Left cardiac atrium (tissue), 4 donors: ENCODE measurements at regions of chr4 and their contacts with region 1.

Region 1: DNA sequence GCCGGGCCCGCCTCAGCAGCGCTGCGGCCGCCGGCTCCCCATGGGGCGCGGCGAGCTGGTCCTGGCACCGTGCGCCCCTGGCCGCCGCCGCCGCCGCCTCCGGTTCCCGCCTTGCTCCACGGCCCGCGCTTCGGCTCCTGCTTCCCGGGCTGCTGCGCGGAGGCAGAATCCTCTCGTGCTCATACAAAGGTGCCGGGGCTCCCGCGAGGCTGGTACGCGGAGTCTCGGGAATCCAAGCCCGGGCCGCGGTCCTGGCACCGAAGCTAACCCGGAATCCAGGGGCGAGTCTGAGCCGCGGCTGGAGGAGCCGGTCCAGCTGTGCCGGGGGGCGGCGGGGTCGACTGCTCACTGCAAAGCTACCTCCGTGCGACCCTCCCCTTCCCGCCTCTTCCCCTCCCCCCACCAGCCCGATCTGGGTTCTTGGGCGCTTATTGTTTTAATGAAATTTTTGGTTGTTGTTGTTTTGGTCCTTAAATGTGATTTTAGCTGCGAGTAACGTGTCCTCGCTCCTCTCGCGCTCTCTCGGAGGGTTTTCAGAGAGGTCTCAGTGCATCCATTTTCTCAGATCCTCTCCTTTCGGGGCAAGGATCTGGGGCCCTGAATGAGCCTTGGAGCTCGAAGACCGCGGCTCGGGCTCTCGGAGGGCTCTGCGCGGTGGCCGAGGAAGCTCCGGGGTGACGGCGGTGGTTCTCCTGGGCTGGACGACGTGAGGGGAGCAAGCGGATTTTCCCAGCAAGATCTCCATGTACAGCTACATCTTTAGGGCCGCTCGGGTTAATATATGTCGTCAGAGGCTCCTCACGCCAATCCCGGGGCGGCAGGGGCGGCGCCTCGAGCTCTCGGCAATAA is at the start of gene HAND2:
- DNase-seq: peak; percentile 91
- ATAC-seq: peak; percentile 72 to 73
- total RNA-seq, gene HAND2: 63.2 to 75.1 TPM

Region 2: GRCh38 chr4:173685165-173685830 is 155.6 kb after region 1 on chr4:
- intact Hi-C with region 1: loop called in 1 of 2 experiments (anchors 10 kb)
- DNase-seq: no peak
- ATAC-seq: no peak

Region 3: GRCh38 chr4:173748353-173748752 is 218.7 kb after region 1 on chr4:
- intact Hi-C with region 1: loop called (anchors 5 kb)
- DNase-seq: no peak
- ATAC-seq: peak; percentile 38 to 44